ENCODE measurements at regions of chr6 and their contacts with region 1.

Region 1: DNA sequence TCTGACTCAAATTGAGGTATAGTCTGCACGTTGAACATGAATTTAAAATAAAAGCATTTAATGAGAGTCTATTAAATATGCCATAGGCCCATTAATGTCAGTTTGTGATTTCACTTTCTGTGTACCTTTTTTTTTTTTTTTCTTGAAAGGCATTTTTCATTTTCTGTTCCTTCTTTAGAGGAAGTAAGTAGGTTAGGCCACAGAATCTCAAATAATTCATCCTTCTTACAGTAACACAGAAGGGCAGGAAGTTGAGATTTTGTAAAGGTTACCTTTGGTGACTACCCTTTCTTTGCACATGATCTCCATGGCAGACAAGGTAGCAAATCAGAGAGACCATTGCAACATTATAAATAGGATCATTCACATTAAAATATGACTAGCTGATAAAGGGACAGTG is 9.6 kb downstream of the L3MBTL3 start:
- DNase-seq: no peak
- H3K4me3 Mint-ChIP-seq: peak overlapping the region; percentile 36
- H3K27ac Mint-ChIP-seq: peak overlapping the region; percentile 72
- H3K4me1 Mint-ChIP-seq: peaks cover 34% of the 10 kb centered on the region
- H3K27me3 Mint-ChIP-seq: peaks cover 5% of the 10 kb centered on the region

Region 2: DNA sequence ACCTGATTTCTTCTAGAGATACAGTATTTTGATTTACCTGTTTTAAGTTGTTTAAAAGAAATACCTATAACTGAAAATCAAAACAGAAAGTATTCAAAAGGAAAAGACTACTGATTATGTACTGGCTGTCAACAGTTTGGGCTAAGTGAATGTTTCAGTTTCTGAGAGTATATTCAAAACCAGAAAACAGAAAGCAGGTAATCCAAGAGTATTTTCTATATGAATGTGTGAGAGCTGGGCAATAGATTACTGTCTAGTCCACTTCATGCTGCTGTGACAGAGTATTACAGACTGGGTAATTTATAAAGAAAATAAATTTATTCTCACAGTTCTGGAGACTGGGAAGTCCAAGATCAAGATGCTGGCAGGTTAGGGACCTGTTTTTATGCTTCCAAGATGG is 579.0 kb before region 1 on chr6:
- intact Hi-C with region 1: loop called (anchors 5 kb)
- DNase-seq: no peak
- H3K4me3 Mint-ChIP-seq: no peak overlapping the region
- H3K27ac Mint-ChIP-seq: no peak overlapping the region
- H3K4me1 Mint-ChIP-seq: peaks cover 54% of the 10 kb centered on the region
- H3K27me3 Mint-ChIP-seq: no peaks in the 10 kb centered on the region

Region 3: GRCh38 chr6:129490521-129491245 is 537.3 kb before region 1 on chr6:
- intact Hi-C with region 1: loop called (anchors 2 kb)
- DNase-seq: peak; percentile 91
- H3K4me3 Mint-ChIP-seq: peak overlapping the region; percentile 84
- H3K27ac Mint-ChIP-seq: peak overlapping the region; percentile 98
- H3K4me1 Mint-ChIP-seq: peaks cover 61% of the 10 kb centered on the region
- H3K27me3 Mint-ChIP-seq: no peaks in the 10 kb centered on the region

Region 4: DNA sequence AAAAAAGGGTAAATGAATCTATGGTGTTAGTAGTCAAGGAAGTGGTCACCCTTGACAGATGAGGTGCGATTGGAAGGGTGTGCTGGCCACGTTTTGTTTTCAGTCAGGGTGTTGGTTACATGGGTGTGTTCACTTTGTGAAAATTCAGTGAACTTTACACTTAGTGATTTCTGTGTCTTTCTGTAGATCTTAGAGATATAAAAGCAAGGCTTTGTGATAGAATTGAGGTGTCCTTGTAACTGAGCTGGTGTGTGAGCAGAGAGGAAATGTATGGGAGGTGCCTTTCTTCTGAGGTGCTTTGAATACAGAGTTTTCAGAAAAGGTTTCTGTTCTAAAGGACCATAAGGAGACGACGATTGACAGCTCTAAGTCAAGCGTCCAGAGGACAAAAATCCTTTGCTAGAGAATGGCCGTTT is 104.3 kb after region 1 on chr6:
- intact Hi-C with region 1: loop called (anchors 5 kb)
- DNase-seq: peak; percentile 92
- H3K4me3 Mint-ChIP-seq: peak overlapping the region; percentile 66
- H3K27ac Mint-ChIP-seq: peak overlapping the region; percentile 93
- H3K4me1 Mint-ChIP-seq: peaks cover 62% of the 10 kb centered on the region
- H3K27me3 Mint-ChIP-seq: no peaks in the 10 kb centered on the region

Region 5: DNA sequence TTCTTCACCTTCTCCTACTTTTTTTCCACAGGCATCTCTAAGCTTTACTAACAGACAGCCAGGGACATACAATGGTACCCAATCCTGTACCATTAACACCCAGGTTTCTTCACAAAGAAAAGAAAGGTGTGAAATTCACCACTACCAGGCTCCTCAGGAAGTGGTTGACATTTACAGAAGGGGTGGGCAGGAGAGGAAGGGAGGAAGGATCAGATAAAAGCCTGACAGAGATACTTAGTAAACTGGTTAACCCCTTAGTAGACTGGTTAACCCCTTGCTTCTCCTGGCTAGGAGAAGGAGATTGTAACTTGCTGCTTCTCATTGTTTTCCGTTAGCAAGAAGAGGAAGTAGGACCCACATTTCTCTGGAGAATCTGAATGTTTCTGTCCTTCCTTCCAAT is 187.6 kb after region 1 on chr6:
- intact Hi-C with region 1: loop called (anchors 5 kb)
- DNase-seq: peak; percentile 86
- H3K4me3 Mint-ChIP-seq: peak overlapping the region; percentile 76
- H3K27ac Mint-ChIP-seq: peak overlapping the region; percentile 60
- H3K4me1 Mint-ChIP-seq: peaks cover 40% of the 10 kb centered on the region
- H3K27me3 Mint-ChIP-seq: no peaks in the 10 kb centered on the region